Common myeloid progenitor, CD34-positive (primary cell): ENCODE measurements at regions of chr4 and their contacts with region 1.

Region 1: DNA sequence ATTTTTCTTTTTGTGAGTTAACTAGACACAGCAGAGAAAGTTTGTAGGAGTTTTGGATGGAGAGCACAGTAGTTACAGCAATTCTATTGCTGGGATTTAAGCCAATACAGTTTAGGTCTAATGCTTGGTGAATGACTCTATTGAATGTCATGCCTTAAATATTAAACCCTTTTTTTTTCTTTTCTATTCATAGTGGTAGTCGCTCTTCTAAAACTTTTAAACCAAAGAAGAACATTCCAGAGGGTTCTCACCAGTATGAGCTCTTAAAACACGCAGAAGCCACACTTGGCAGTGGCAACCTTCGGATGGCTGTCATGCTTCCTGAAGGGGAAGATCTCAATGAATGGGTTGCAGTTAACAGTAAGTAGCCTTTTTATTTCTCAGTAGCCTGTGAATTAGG is 34.8 kb upstream of the DCK start:
- DNase-seq: no peak
- H3K4me3 ChIP-seq: no peak overlapping the region
- H3K27ac ChIP-seq: no peak overlapping the region
- H3K4me1 ChIP-seq: peaks cover 0 to 6% (median 1%) of the 10 kb centered on the region in 4 experiments
- H3K27me3 ChIP-seq: no peaks in the 10 kb centered on the region

Region 2: DNA sequence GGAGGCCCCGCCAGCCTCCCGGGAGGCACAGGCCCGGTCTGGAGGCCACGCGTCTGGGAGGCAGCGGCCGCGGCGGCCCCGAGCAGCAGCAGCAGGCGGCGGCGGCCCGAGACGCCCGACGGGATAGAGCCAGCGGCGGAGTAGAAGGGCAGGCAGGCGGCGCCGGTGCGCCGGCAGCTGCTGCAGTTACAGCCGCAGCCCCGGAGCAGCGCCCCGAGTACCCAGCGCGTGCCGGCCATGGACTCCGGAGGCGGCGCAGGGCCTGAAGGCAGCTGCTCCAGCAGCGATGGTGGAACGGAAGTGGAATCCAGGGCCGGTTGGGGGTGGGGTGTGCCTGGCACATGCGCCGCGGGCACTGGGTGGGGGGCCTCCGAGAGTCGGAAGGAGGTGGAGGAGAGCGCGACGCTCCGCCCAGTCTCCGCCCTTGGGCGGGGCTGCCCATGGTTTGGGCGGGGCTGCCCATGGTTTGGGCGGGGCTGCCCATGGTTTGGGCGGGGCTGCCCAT is 119.0 kb before region 1 on chr4 and contains the start of gene GRSF1:
- CTCF ChIA-PET with region 1: no interaction called
- POLR2A ChIA-PET with region 1: no interaction called
- DNase-seq: peak; percentile 92 to 95 (median 95)
- H3K4me3 ChIP-seq: peak within 1 kb of the TSS; percentile 81 to 95 (median 87)
- H3K27ac ChIP-seq: peak within 1 kb of the TSS; percentile 58 to 83
- H3K4me1 ChIP-seq: peaks cover 5 to 28% (median 16%) of the 10 kb centered on the region in 4 experiments
- H3K27me3 ChIP-seq: no peaks in the 10 kb centered on the region

Region 3: GRCh38 chr4:70969076-70969475 is 10.4 kb after region 1 on chr4:
- CTCF ChIA-PET with region 1: interaction called, 22 read pairs
- POLR2A ChIA-PET with region 1: interaction called, 3 read pairs
- DNase-seq: no peak
- H3K4me3 ChIP-seq: no peak overlapping the region
- H3K27ac ChIP-seq: no peak overlapping the region
- H3K4me1 ChIP-seq: peaks cover 22 to 35% (median 27%) of the 10 kb centered on the region in 4 experiments
- H3K27me3 ChIP-seq: no peaks in the 10 kb centered on the region